ENCODE measurements at regions of chr3 and their contacts with region 1.

Region 1: GRCh38 chr3:106609666-106610301 is 741.0 kb upstream of the CBLB start:
- DNase-seq: peak; percentile 57 to 76
- H3K4me3 ChIP-seq: no peak overlapping the region
- H3K27ac ChIP-seq: no peak overlapping the region
- H3K4me1 ChIP-seq: peaks cover 0 to 3% (median 0%) of the 10 kb centered on the region in 4 experiments; a peak in 2 of 7 replicates
- H3K27me3 ChIP-seq: no peaks in the 10 kb centered on the region
- CTCF ChIP-seq: peak; percentile 25 to 86 (median 72)
- EP300 ChIP-seq: no peak
- POLR2A ChIP-seq: no peak
- RAD21 ChIP-seq: peak; percentile 93 to 97

Region 2: GRCh38 chr3:105686278-105686897 is 923.4 kb before region 1 on chr3:
- CTCF ChIA-PET with region 1: interaction called, 12 read pairs
- POLR2A ChIA-PET with region 1: no interaction called
- DNase-seq: no peak
- H3K4me3 ChIP-seq: no peak overlapping the region
- H3K27ac ChIP-seq: no peak overlapping the region
- H3K4me1 ChIP-seq: no peaks in the 10 kb centered on the region
- H3K27me3 ChIP-seq: no peaks in the 10 kb centered on the region
- CTCF ChIP-seq: peak in 2 of 3 experiments; percentile 37 to 46; a peak in 2 of 4 replicates
- EP300 ChIP-seq: no peak
- POLR2A ChIP-seq: no peak
- RAD21 ChIP-seq: peak; percentile 58 to 72

Measured in H1 (cell line).